ENCODE measurements at regions of chr4 and their contacts with region 1.

Region 1: GRCh38 chr4:77433418-77433733 is 172.2 kb upstream of the CXCL13 start:
- DNase-seq: no peak
- ATAC-seq: peak; percentile 76 to 95 (median 83)
- H3K4me3 ChIP-seq: no peak overlapping the region
- H3K27ac ChIP-seq: peak overlapping the region in 1 of 3 donors; percentile 6
- H3K4me1 ChIP-seq: peaks cover 0 to 27% (median 13%) of the 10 kb centered on the region in 4 donors
- H3K27me3 ChIP-seq: no peaks in the 10 kb centered on the region
- CTCF ChIP-seq: peak; percentile 52 to 67 (median 56)
- POLR2A ChIP-seq: no peak

Region 2: DNA sequence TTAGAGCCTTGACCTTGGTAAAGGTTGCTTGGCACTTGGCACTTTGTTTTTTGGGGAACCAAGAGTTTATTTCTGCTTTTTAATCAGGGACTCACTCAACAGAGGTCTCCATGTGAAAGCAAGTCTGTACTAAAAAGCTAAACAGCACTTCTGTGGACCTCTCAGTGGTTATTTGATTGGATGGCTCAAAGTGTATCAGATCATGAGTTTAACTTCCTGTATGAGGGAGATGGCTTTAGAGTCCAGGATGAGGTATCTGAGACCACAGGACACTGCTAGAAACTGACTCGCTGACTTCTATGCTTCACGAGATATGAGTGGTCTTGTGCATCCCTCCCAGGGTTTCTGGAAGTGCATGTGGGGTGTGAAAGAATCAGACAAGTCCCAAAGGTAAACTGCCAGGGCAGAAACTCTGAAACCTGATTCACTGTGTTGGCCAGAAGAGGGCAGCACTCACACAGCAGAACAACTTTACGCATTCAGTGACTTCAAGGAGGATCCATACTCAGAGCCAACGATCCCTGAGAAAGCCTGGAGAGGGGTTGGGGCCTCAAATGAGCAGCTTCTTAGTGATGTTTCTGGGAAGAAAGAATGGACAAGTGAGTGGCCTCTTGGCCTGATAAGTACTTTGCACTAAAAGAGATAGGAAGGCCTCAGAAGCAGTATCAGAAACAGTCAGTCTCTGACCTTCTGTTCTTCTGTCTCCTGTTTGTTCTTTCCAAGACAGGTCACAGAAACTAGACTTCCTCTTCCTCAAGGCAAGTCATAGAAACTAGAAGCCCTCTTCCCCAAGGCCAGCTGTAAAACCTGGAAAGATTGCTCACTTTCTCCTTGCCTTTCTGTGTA is 48.0 kb before region 1 on chr4:
- intact Hi-C with region 1: loop called in 1 of 2 experiments (anchors 10 kb)
- DNase-seq: peak; percentile 38 to 74 (median 56)
- ATAC-seq: peak; percentile 91 to 95 (median 92)
- H3K4me3 ChIP-seq: no peak overlapping the region
- H3K27ac ChIP-seq: no peak overlapping the region
- H3K4me1 ChIP-seq: no peaks in the 10 kb centered on the region
- H3K27me3 ChIP-seq: no peaks in the 10 kb centered on the region
- CTCF ChIP-seq: peak; percentile 77 to 87 (median 78)
- POLR2A ChIP-seq: no peak

Region 3: DNA sequence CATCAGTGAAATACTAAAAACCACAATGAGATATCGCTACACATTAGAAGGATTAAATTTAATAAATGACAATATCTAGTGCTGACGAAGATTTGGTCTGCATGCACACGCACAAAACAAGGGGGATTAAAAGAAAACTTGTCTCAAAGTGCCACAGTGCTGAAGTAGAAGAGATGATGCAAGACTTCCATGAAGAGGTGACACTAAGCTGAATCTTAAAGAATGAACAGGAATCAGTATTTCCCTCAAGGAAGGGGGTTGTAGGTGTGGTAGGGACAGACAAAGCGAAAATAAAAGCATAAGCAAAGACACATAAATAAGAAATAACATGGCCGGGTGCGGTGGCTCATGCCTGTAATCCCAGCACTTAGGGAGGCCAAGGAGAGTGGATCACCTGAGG is 352.3 kb after region 1 on chr4:
- intact Hi-C with region 1: no loop called
- DNase-seq: no peak
- ATAC-seq: no peak
- H3K4me3 ChIP-seq: no peak overlapping the region
- H3K27ac ChIP-seq: no peak overlapping the region
- H3K4me1 ChIP-seq: peaks cover 0 to 13% (median 0%) of the 10 kb centered on the region in 4 donors
- H3K27me3 ChIP-seq: no peaks in the 10 kb centered on the region
- CTCF ChIP-seq: no peak
- POLR2A ChIP-seq: no peak

Measured in right lobe of liver (tissue), 6 donors.